B cell (primary cell): ENCODE measurements at regions of chrX and their contacts with region 1.

Region 1: DNA sequence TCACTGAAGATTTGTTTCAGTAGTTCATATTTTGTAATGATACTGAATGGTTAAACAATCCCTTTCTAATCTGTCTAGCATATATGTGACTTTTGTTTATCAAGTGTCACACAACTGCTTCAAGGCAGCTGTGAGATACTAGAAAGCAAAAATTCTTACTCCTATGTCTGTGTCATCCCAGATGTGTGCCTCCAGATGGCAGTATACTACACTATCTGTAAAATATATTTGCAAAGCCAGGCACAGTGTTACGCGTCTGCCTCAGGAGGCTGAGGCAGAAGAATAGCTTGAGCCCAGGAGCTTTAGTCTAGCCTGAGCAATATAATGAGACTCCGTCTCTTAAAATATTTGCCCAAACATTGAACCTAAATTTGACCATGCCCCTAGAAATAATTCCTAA is 4.0 kb downstream of the NUDT10 start:
- DNase-seq: peak; percentile 39
- ATAC-seq: peak; percentile 74
- H3K4me3 ChIP-seq: no peak overlapping the region
- H3K4me3 Mint-ChIP-seq: no peak overlapping the region
- H3K27ac ChIP-seq: no peak overlapping the region
- H3K27ac Mint-ChIP-seq: no peak overlapping the region
- H3K4me1 ChIP-seq: no peaks in the 10 kb centered on the region
- H3K4me1 Mint-ChIP-seq: peaks cover 5% of the 10 kb centered on the region
- H3K27me3 ChIP-seq: no peaks in the 10 kb centered on the region
- H3K27me3 Mint-ChIP-seq: no peaks in the 10 kb centered on the region
- CTCF ChIP-seq: peak; percentile 53

Region 2: GRCh38 chrX:51144852-51145442 is 191.6 kb before region 1 on chrX:
- CTCF ChIA-PET with region 1: interaction called, 3 read pairs
- POLR2A ChIA-PET with region 1: no interaction called
- intact Hi-C with region 1: loop called (anchors 10 kb)
- DNase-seq: peak; percentile 39
- ATAC-seq: no peak
- H3K4me3 ChIP-seq: no peak overlapping the region
- H3K4me3 Mint-ChIP-seq: no peak overlapping the region
- H3K27ac ChIP-seq: no peak overlapping the region
- H3K27ac Mint-ChIP-seq: no peak overlapping the region
- H3K4me1 ChIP-seq: no peaks in the 10 kb centered on the region
- H3K4me1 Mint-ChIP-seq: no peaks in the 10 kb centered on the region
- H3K27me3 ChIP-seq: no peaks in the 10 kb centered on the region
- H3K27me3 Mint-ChIP-seq: peaks cover 3% of the 10 kb centered on the region
- CTCF ChIP-seq: peak; percentile 65

Region 3: DNA sequence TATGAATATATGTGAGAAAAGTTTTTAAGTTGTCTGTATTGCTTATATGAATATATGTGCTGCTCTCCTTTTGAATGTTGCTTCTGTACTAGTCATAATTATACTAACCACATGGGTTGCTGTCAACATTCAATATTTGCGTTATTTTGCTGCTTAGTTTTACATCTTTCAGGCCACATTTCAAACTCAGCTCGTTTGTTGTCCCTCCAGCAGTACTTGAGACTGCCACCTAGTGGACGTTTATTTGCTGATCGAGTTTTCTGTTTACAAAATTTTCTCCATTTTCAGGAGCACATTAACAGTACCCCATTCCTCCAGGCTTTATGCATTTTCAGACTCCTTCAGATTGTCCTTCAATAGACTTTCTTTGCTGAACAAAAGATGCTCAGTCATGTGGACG is 84.0 kb after region 1 on chrX:
- CTCF ChIA-PET with region 1: interaction called, 78 read pairs
- POLR2A ChIA-PET with region 1: no interaction called
- intact Hi-C with region 1: loop called (anchors 1 kb)
- DNase-seq: peak; percentile 61
- ATAC-seq: no peak
- H3K4me3 ChIP-seq: no peak overlapping the region
- H3K4me3 Mint-ChIP-seq: no peak overlapping the region
- H3K27ac ChIP-seq: no peak overlapping the region
- H3K27ac Mint-ChIP-seq: no peak overlapping the region
- H3K4me1 ChIP-seq: peaks cover 0 to 5% of the 10 kb centered on the region in 2 donors
- H3K4me1 Mint-ChIP-seq: peaks cover 11% of the 10 kb centered on the region
- H3K27me3 ChIP-seq: peaks cover 0 to 3% (median 0%) of the 10 kb centered on the region in 4 experiments
- H3K27me3 Mint-ChIP-seq: no peaks in the 10 kb centered on the region
- CTCF ChIP-seq: peak; percentile 73

Region 4: GRCh38 chrX:51461053-51462044 is 124.8 kb after region 1 on chrX:
- CTCF ChIA-PET with region 1: interaction called, 65 read pairs
- POLR2A ChIA-PET with region 1: no interaction called
- intact Hi-C with region 1: loop called (anchors 1 kb)
- DNase-seq: peak; percentile 61
- ATAC-seq: no peak
- H3K4me3 ChIP-seq: no peak overlapping the region
- H3K4me3 Mint-ChIP-seq: no peak overlapping the region
- H3K27ac ChIP-seq: no peak overlapping the region
- H3K27ac Mint-ChIP-seq: no peak overlapping the region
- H3K4me1 ChIP-seq: no peaks in the 10 kb centered on the region
- H3K4me1 Mint-ChIP-seq: no peaks in the 10 kb centered on the region
- H3K27me3 ChIP-seq: no peaks in the 10 kb centered on the region
- H3K27me3 Mint-ChIP-seq: no peaks in the 10 kb centered on the region
- CTCF ChIP-seq: peak; percentile 78

Region 5: DNA sequence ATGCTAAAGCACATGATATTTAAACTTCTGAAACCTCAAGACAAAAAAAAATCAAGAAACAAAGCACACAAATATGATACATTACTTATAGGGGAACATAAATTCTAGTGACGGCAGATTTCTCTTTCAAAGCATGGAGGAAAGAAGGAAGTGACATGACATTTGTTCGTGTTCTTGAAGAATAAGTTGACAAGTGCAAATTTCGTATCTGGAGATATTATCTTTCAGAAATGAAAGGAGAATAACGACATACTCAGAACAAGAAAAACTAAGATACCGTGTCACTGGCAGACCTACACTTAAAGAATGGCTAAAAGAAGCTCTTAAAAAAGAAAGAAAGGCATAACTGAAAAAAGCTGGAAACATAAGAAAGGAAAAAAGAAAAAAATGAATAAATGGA is 329.4 kb after region 1 on chrX:
- CTCF ChIA-PET with region 1: no interaction called
- POLR2A ChIA-PET with region 1: no interaction called
- intact Hi-C with region 1: no loop called
- DNase-seq: no peak
- ATAC-seq: no peak
- H3K4me3 ChIP-seq: no peak overlapping the region
- H3K4me3 Mint-ChIP-seq: no peak overlapping the region
- H3K27ac ChIP-seq: no peak overlapping the region
- H3K27ac Mint-ChIP-seq: no peak overlapping the region
- H3K4me1 ChIP-seq: no peaks in the 10 kb centered on the region
- H3K4me1 Mint-ChIP-seq: no peaks in the 10 kb centered on the region
- H3K27me3 ChIP-seq: peaks cover 0 to 3% (median 0%) of the 10 kb centered on the region in 4 experiments
- H3K27me3 Mint-ChIP-seq: peaks cover 5% of the 10 kb centered on the region
- CTCF ChIP-seq: no peak